A673 (cell line): ENCODE measurements at regions of chr6 and their contacts with region 1.

Region 1: GRCh38 chr6:88403486-88403885 is 237.3 kb upstream of the CNR1 start:
- DNase-seq: no peak
- H3K4me3 ChIP-seq: no peak overlapping the region
- H3K27ac ChIP-seq: no peak overlapping the region
- H3K4me1 ChIP-seq: no peaks in the 10 kb centered on the region
- H3K27me3 ChIP-seq: peaks cover 10% of the 10 kb centered on the region
- CTCF ChIP-seq: no peak

Region 2: GRCh38 chr6:87784690-87785089 is 618.8 kb before region 1 on chr6:
- CTCF ChIA-PET with region 1: no interaction called
- POLR2A ChIA-PET with region 1: interaction called, 10 read pairs
- intact Hi-C with region 1: no loop called
- DNase-seq: no peak
- H3K4me3 ChIP-seq: no peak overlapping the region
- H3K27ac ChIP-seq: no peak overlapping the region
- H3K4me1 ChIP-seq: peaks cover 14% of the 10 kb centered on the region
- H3K27me3 ChIP-seq: no peaks in the 10 kb centered on the region
- CTCF ChIP-seq: no peak